SK-N-SH (cell line): ENCODE measurements at regions of chrX and their contacts with region 1.

Region 1: GRCh38 chrX:154748712-154749343 is 2.0 kb downstream of the GAB3 start:
- DNase-seq: peak; percentile 70
- H3K4me3 ChIP-seq: no peak overlapping the region
- H3K27ac ChIP-seq: no peak overlapping the region
- H3K4me1 ChIP-seq: peaks cover 0 to 2% of the 10 kb centered on the region in 2 experiments; a peak in 1 of 4 replicates
- H3K27me3 ChIP-seq: peaks cover 13% of the 10 kb centered on the region; the same call in 1 of the 2 replicates
- CTCF ChIP-seq: peak; percentile 84
- EP300 ChIP-seq: no peak
- RAD21 ChIP-seq: peak; percentile 81

Region 2: GRCh38 chrX:154717824-154718223 is 31.0 kb before region 1 on chrX:
- CTCF ChIA-PET with region 1: interaction called, 14 read pairs
- POLR2A ChIA-PET with region 1: no interaction called
- DNase-seq: peak; percentile 7
- H3K4me3 ChIP-seq: no peak overlapping the region
- H3K27ac ChIP-seq: no peak overlapping the region
- H3K4me1 ChIP-seq: no peaks in the 10 kb centered on the region
- H3K27me3 ChIP-seq: no peaks in the 10 kb centered on the region
- CTCF ChIP-seq: 0 out of 2 replicates have a peak, but pooled peaks have one; percentile 8
- EP300 ChIP-seq: no peak
- RAD21 ChIP-seq: no peak

Region 3: GRCh38 chrX:154762523-154763289 is 13.9 kb after region 1 on chrX and contains the start of gene DKC1:
- CTCF ChIA-PET with region 1: interaction called, 17 read pairs
- POLR2A ChIA-PET with region 1: interaction called, 4 read pairs
- DNase-seq: peak; percentile 92
- H3K4me3 ChIP-seq: peak within 1 kb of the TSS; percentile 77 to 80
- H3K27ac ChIP-seq: peak within 1 kb of the TSS; percentile 68 to 97
- H3K4me1 ChIP-seq: peaks cover 0 to 9% of the 10 kb centered on the region in 2 experiments; a peak in 2 of 4 replicates
- H3K27me3 ChIP-seq: no peaks in the 10 kb centered on the region
- CTCF ChIP-seq: peak; percentile 24
- EP300 ChIP-seq: no peak
- RAD21 ChIP-seq: no peak
- polyA plus RNA-seq, gene DKC1: 53.0 and 73.6 TPM in 2 replicates

Region 4: GRCh38 chrX:154840856-154841255 is 92.0 kb after region 1 on chrX:
- CTCF ChIA-PET with region 1: interaction called, 14 read pairs
- POLR2A ChIA-PET with region 1: no interaction called
- DNase-seq: peak; percentile 45
- H3K4me3 ChIP-seq: no peak overlapping the region
- H3K27ac ChIP-seq: no peak overlapping the region
- H3K4me1 ChIP-seq: no peaks in the 10 kb centered on the region
- H3K27me3 ChIP-seq: no peaks in the 10 kb centered on the region
- CTCF ChIP-seq: peak; percentile 65
- EP300 ChIP-seq: no peak
- RAD21 ChIP-seq: peak; percentile 74

Region 5: GRCh38 chrX:155009994-155010472 is 261.2 kb after region 1 on chrX:
- CTCF ChIA-PET with region 1: no interaction called
- POLR2A ChIA-PET with region 1: no interaction called
- DNase-seq: no peak
- H3K4me3 ChIP-seq: no peak overlapping the region
- H3K27ac ChIP-seq: peak overlapping the region in 1 of 2 experiments; percentile 71; a peak in 2 of 4 replicates
- H3K4me1 ChIP-seq: peaks cover 0 to 6% of the 10 kb centered on the region in 2 experiments; a peak in 1 of 4 replicates
- H3K27me3 ChIP-seq: no peaks in the 10 kb centered on the region
- CTCF ChIP-seq: no peak
- EP300 ChIP-seq: no peak
- RAD21 ChIP-seq: no peak